H1 (cell line): ENCODE measurements at regions of chr6 and their contacts with region 1.

Region 1: DNA sequence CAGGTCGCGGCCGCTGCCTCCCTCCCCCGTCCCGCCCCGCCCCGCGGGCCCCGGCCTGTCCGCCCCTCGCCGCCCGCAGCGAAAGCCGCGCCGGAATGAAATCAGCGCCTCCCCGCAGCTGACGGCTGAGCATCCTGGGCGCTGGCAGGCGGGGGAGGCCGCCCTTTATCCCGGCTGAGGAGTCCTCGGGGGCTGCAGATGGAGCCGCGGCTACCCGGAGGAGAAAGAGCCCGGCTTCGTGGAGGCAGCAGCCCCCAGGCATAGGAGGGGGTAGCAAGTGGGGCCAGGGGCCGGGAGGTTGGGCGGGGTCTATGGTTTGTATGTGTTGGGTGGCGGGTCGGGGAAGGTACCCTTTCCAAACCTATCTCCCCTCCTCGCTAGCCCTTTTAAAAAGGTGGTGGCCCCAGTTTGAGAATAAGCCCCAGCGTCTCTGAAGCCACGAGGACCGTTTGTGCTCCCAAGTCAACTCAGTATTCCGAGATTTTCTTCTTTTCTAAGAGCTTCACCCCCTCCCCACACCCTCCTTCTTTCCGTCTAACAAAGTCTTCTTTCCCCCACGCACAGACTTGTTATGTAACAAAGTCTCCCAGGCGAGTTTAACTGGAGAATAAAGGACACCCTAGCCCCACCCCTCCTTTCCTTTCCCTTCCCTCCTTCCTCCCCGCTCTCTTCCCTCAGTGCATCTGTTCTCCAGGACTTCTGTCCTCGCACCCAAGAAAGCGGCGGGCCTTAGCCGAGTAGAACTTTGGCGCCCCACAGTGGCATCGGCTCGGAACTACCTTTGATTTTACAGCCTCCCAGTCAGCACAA is 11.0 kb downstream of the POU3F2 start:
- DNase-seq: peak in 1 of 2 experiments; percentile 95
- H3K4me3 ChIP-seq: peak overlapping the region; percentile 22 to 63 (median 44)
- H3K27ac ChIP-seq: no peak overlapping the region
- H3K4me1 ChIP-seq: peaks cover 2 to 7% (median 4%) of the 10 kb centered on the region in 4 experiments
- H3K27me3 ChIP-seq: peaks cover 47 to 75% (median 64%) of the 10 kb centered on the region in 4 experiments
- CTCF ChIP-seq: peak; percentile 82 to 93 (median 83)
- EP300 ChIP-seq: no peak
- POLR2A ChIP-seq: no peak
- RAD21 ChIP-seq: peak; percentile 97 to 98

Region 2: GRCh38 chr6:98834060-98835031 is 11.1 kb before region 1 on chr6 and contains the start of gene POU3F2:
- CTCF ChIA-PET with region 1: interaction called, 79 read pairs
- POLR2A ChIA-PET with region 1: interaction called, 12 read pairs
- DNase-seq: peak; percentile 88 to 92
- H3K4me3 ChIP-seq: peak within 1 kb of the TSS; percentile 33 to 63 (median 55)
- H3K27ac ChIP-seq: no peak within 1 kb of the TSS
- H3K4me1 ChIP-seq: peaks cover 2 to 29% (median 22%) of the 10 kb centered on the region in 4 experiments
- H3K27me3 ChIP-seq: peaks cover 63 to 91% (median 79%) of the 10 kb centered on the region in 4 experiments
- CTCF ChIP-seq: no peak
- EP300 ChIP-seq: no peak; a peak in 1 of 3 replicates
- POLR2A ChIP-seq: no peak
- RAD21 ChIP-seq: no peak
- total RNA-seq, gene POU3F2: 0.35 and 0.48 TPM in 2 replicates

Region 3: GRCh38 chr6:99119109-99120031 is 274.0 kb after region 1 on chr6:
- CTCF ChIA-PET with region 1: interaction called, 15 read pairs
- POLR2A ChIA-PET with region 1: no interaction called
- DNase-seq: no peak
- H3K4me3 ChIP-seq: no peak overlapping the region
- H3K27ac ChIP-seq: no peak overlapping the region
- H3K4me1 ChIP-seq: no peaks in the 10 kb centered on the region
- H3K27me3 ChIP-seq: no peaks in the 10 kb centered on the region
- CTCF ChIP-seq: peak in 2 of 3 experiments; percentile 59 to 61; a peak in 2 of 4 replicates
- EP300 ChIP-seq: no peak
- POLR2A ChIP-seq: no peak
- RAD21 ChIP-seq: peak; percentile 89 to 91